HepG2 (cell line): ENCODE measurements at regions of chr5 and their contacts with region 1.

Region 1: DNA sequence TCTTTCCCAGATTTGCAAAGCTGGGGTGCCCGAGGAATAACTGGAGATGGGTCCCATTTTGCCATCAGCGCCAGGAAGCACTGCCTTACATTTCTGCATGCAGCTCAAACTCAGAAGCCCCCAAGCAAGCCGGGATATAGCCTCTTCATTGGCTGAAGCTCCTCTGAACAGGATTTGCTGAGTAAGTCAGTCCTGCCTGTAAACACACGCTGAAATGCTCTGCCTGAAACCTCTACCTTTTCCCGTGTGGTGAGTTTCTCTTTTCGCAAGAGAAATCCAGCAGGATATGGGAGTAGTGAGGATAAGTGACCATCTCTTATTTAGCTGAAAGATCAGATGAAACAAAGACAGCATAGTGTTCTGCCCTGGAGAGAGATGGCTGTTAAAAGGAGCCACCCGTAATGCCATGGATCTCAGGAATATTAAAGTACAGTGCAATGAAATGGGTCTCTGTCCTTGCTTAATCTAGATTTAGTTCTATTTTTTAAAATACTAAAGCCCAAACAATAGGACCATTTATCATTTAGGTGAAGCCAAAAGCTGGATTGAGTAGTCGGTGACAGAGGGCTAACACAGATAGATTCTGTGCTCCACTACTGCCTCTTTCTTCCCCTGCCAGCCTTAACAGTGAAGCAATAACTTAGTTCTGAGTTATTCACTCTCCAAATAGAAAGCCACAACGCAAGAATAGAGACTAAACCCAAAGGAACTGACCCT is 177.5 kb upstream of the PPP2R2B start:
- DNase-seq: no peak
- ATAC-seq: no peak
- H3K4me3 ChIP-seq: no peak overlapping the region
- H3K27ac ChIP-seq: no peak overlapping the region
- H3K4me1 ChIP-seq: no peaks in the 10 kb centered on the region
- H3K27me3 ChIP-seq: no peaks in the 10 kb centered on the region; a peak in 1 of 5 replicates
- CTCF ChIP-seq: no peak
- EP300 ChIP-seq: no peak
- POLR2A ChIP-seq: no peak
- RAD21 ChIP-seq: no peak

Region 2: GRCh38 chr5:147080391-147080790 is 24.4 kb after region 1 on chr5:
- CTCF ChIA-PET with region 1: no interaction called
- POLR2A ChIA-PET with region 1: no interaction called
- in situ Hi-C with region 1: no loop called
- intact Hi-C with region 1: loop called (anchors 1 kb)
- DNase-seq: no peak
- ATAC-seq: no peak
- H3K4me3 ChIP-seq: no peak overlapping the region
- H3K27ac ChIP-seq: no peak overlapping the region
- H3K4me1 ChIP-seq: no peaks in the 10 kb centered on the region
- H3K27me3 ChIP-seq: no peaks in the 10 kb centered on the region; a peak in 1 of 5 replicates
- CTCF ChIP-seq: no peak
- EP300 ChIP-seq: no peak
- POLR2A ChIP-seq: no peak
- RAD21 ChIP-seq: no peak

Region 3: GRCh38 chr5:147567917-147568598 is 512.0 kb after region 1 on chr5:
- CTCF ChIA-PET with region 1: no interaction called
- POLR2A ChIA-PET with region 1: no interaction called
- in situ Hi-C with region 1: no loop called
- intact Hi-C with region 1: no loop called
- DNase-seq: no peak
- ATAC-seq: no peak
- H3K4me3 ChIP-seq: no peak overlapping the region
- H3K27ac ChIP-seq: no peak overlapping the region
- H3K4me1 ChIP-seq: no peaks in the 10 kb centered on the region
- H3K27me3 ChIP-seq: no peaks in the 10 kb centered on the region
- CTCF ChIP-seq: no peak
- EP300 ChIP-seq: no peak
- POLR2A ChIP-seq: no peak
- RAD21 ChIP-seq: no peak